OCI-LY7 (cell line): ENCODE measurements at regions of chr7 and their contacts with region 1.

Region 1: DNA sequence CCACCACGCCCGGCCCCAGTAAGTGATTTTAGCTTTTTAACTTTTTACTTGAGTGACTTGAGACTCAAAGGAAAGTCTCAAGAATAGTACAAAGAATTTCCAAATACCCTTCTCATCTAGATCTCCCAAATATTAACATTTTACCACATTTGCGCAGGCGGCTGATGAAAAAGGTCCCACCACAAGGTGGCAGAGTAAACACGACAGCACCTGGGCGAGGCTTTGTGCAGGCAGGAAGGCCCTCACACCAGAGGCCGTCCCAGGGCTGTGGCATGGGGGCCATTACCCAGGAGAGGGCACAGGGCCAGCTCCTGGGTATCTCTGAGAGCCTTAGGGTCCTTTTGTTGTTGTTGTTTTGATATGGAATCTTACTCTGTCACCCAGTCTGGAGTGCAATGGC is 50.0 kb upstream of the WIPI2 start:
- DNase-seq: peak; percentile 57
- H3K4me3 ChIP-seq: no peak overlapping the region
- H3K27ac ChIP-seq: no peak overlapping the region
- H3K4me1 ChIP-seq: peaks cover 11% of the 10 kb centered on the region
- CTCF ChIP-seq: peak; percentile 77

Region 2: DNA sequence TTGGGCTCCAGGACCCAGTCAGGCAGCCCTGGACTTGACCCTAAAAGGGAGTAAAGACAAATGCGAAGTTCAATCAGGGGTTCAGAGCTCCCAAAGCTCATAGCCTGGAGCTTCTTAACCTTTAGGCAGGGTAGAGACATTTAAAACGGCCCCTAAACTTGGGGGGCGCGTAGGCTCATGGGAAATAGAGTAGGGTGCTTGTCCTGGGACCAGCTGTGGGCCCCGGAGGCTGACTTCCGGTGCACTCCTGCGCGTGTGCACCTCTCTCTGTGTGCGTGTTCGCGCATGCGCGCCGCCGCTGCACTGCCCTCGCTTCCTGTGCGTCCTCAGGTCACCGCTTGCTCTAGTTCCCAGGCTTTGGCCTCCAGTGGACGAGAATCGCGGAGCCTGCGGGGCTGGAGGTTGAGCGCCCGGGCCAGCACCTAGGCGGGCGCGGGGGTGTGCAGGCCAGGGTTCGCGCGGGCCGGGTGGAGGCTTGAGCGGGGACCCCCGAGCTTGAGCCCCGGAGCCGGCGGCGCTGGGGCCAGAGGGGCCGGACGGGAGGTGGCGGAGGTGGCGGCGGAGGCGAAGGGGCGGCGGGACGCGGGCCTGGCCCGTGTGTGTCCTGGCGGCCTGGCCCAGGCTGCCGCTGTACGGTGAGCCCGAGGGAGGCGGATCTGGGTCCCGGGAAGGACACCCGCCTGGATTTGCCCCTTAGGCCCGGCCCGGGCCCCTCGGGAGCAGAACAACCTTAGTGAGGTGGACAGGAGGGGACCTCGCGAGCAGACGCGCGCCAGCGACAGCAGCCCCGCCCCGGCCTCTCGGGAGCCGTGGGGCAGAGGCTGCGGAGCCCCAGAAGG is 94.2 kb before region 1 on chr7 and contains the start of gene RBAK:
- CTCF ChIA-PET with region 1: no interaction called
- POLR2A ChIA-PET with region 1: no interaction called
- intact Hi-C with region 1: no loop called
- DNase-seq: peak; percentile 98
- H3K4me3 ChIP-seq: peak within 1 kb of the TSS; percentile 86
- H3K27ac ChIP-seq: peak within 1 kb of the TSS; percentile 13
- H3K4me1 ChIP-seq: peaks cover 13% of the 10 kb centered on the region
- CTCF ChIP-seq: no peak
- total RNA-seq, gene RBAK: 7.4 and 9.5 TPM in 2 replicates

Region 3: GRCh38 chr7:5177060-5177459 is 37.1 kb after region 1 on chr7:
- CTCF ChIA-PET with region 1: no interaction called
- POLR2A ChIA-PET with region 1: no interaction called
- intact Hi-C with region 1: loop called (anchors 1 kb)
- DNase-seq: no peak
- H3K4me3 ChIP-seq: no peak overlapping the region
- H3K27ac ChIP-seq: no peak overlapping the region
- H3K4me1 ChIP-seq: no peaks in the 10 kb centered on the region
- CTCF ChIP-seq: no peak

Region 4: DNA sequence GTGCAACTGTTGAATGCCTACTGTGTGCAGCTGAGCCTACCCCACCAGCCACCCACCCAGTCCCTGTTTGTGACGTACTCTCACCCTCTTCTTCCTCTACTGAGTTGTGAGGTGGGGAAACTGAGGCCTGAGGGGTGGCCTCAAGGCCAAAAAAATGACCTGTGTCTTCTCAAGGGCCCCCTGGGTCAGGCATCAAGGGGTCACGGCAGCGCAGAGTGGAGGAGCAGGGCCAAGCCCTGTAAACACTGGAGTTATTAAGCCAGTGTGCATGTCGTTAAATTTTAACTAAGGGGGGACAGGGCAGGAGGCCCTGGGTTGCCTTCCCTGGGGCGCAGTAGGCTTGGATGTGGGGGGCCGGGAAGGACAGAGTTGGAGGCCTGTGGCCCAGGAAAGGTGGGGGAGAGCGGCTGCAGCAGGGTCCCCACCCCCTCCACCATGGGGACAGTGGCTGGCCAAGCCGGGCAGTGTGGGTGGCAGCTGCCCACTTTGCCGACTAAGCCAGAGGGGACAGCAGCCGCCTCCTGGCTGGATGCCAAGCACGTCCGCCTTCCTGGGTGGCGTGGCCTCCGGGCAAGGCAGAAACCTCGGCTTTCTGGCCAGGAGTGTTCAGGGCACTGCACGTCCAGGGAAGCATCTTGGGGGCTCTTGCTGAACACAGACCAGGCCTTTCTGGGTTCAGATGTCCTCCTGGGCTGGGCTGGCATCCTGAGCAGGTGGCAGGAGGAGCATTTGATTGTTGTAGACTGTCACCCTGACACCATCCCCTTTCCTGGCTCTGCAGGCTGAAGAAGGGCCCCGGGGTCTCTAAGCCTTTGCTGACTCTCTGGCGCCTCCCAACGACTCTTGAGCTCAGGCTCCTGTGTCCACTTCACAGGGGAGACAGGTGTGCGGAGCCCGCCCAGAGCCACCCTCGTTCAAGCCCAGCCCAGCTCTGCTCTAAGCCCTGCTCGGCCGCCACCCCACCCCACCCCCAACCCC is 144.6 kb after region 1 on chr7:
- CTCF ChIA-PET with region 1: no interaction called
- POLR2A ChIA-PET with region 1: no interaction called
- intact Hi-C with region 1: loop called (anchors 2 kb)
- DNase-seq: peak; percentile 72
- H3K4me3 ChIP-seq: no peak overlapping the region
- H3K27ac ChIP-seq: no peak overlapping the region
- H3K4me1 ChIP-seq: no peaks in the 10 kb centered on the region
- CTCF ChIP-seq: peak; percentile 70